ENCODE measurements at regions of chr10 and their contacts with region 1.

Region 1: DNA sequence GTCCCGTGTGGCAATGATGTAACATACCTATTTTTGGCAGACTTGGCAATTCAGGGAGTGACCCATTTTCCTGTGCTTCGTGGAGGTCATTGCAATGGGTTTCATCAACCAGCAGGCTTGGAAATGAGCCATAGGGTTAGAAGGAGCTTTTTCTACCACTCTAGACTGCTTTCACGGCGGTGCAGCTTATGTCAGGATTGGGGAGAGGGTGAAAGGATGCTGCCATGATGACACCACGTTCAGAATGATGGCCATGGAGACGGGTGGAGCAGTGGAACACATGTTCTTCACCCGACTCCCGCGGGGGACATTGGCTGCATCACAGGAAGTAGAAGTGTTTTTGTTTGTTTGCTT is 220.2 kb downstream of the EMX2 start:
- DNase-seq: no peak
- H3K4me3 ChIP-seq: no peak overlapping the region
- H3K27ac ChIP-seq: no peak overlapping the region
- H3K4me1 ChIP-seq: no peaks in the 10 kb centered on the region
- H3K27me3 ChIP-seq: no peaks in the 10 kb centered on the region
- CTCF ChIP-seq: no peak
- EP300 ChIP-seq: no peak
- POLR2A ChIP-seq: no peak

Region 2: GRCh38 chr10:118818621-118819221 is 1055.9 kb after region 1 on chr10:
- intact Hi-C with region 1: loop called in 1 of 4 experiments (anchors 10 kb)
- DNase-seq: no peak
- H3K4me3 ChIP-seq: no peak overlapping the region
- H3K27ac ChIP-seq: no peak overlapping the region
- H3K4me1 ChIP-seq: no peaks in the 10 kb centered on the region
- H3K27me3 ChIP-seq: no peaks in the 10 kb centered on the region
- CTCF ChIP-seq: no peak
- EP300 ChIP-seq: no peak
- POLR2A ChIP-seq: no peak

Measured in ovary (tissue), 10 donors.